ENCODE measurements at regions of chr3 and their contacts with region 1.

Region 1: GRCh38 chr3:131995891-131996290 is 38.9 kb downstream of the CPNE4 start:
- DNase-seq: no peak
- ATAC-seq: no peak
- H3K4me3 ChIP-seq: no peak overlapping the region
- H3K4me3 Mint-ChIP-seq: no peak overlapping the region
- H3K27ac ChIP-seq: no peak overlapping the region
- H3K27ac Mint-ChIP-seq: no peak overlapping the region
- H3K4me1 ChIP-seq: no peaks in the 10 kb centered on the region
- H3K4me1 Mint-ChIP-seq: no peaks in the 10 kb centered on the region
- H3K27me3 ChIP-seq: peaks cover 0 to 2% of the 10 kb centered on the region in 2 experiments
- H3K27me3 Mint-ChIP-seq: peaks cover 10% of the 10 kb centered on the region
- CTCF ChIP-seq: no peak

Region 2: DNA sequence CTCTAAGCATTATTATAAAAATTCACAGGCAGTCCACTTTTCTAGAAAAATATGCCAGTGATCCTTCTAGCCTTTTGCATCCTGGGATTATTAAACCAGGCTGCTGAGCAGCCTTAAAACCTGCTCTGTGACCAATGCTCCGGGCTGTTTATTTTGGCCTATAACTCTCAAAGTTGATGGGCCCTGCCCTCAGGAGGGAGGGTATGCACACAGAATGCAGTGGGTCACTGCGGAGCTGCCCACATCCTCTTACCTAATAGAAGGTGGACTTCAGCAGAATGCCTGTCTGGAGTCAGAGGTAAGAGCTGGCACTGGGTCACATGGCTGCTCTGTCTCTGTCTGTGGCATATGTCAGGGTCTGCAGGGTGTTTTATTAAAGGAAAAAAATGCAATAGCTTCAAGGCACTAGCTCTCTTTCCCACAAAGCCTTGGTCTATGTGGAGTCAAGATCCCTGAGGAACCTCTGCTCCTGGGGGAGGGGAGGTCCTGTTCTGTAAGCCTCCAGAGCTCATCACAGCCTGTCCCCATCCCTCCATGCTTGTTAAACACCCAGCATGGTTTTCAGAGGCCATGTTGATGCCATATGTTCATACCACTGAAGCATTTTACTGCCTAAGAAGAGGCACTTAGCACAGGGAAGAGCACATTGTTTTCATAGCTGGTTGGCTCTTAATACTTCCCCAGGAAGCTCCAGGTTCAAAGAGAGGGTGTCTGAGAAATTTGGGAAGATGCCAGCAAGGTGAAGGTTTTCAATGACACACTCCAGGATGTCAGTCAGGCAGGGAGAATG is 13.1 kb after region 1 on chr3:
- CTCF ChIA-PET with region 1: no interaction called
- POLR2A ChIA-PET with region 1: no interaction called
- intact Hi-C with region 1: loop called in 1 of 2 experiments (anchors 1 kb)
- DNase-seq: no peak
- ATAC-seq: no peak
- H3K4me3 ChIP-seq: no peak overlapping the region
- H3K4me3 Mint-ChIP-seq: no peak overlapping the region
- H3K27ac ChIP-seq: no peak overlapping the region
- H3K27ac Mint-ChIP-seq: no peak overlapping the region
- H3K4me1 ChIP-seq: no peaks in the 10 kb centered on the region
- H3K4me1 Mint-ChIP-seq: no peaks in the 10 kb centered on the region
- H3K27me3 ChIP-seq: peaks cover 0 to 7% of the 10 kb centered on the region in 2 experiments
- H3K27me3 Mint-ChIP-seq: peaks cover 13% of the 10 kb centered on the region
- CTCF ChIP-seq: no peak

Measured in CD4-positive, alpha-beta T cell (primary cell).